ENCODE measurements at regions of chr19 and their contacts with region 1.

Region 1: DNA sequence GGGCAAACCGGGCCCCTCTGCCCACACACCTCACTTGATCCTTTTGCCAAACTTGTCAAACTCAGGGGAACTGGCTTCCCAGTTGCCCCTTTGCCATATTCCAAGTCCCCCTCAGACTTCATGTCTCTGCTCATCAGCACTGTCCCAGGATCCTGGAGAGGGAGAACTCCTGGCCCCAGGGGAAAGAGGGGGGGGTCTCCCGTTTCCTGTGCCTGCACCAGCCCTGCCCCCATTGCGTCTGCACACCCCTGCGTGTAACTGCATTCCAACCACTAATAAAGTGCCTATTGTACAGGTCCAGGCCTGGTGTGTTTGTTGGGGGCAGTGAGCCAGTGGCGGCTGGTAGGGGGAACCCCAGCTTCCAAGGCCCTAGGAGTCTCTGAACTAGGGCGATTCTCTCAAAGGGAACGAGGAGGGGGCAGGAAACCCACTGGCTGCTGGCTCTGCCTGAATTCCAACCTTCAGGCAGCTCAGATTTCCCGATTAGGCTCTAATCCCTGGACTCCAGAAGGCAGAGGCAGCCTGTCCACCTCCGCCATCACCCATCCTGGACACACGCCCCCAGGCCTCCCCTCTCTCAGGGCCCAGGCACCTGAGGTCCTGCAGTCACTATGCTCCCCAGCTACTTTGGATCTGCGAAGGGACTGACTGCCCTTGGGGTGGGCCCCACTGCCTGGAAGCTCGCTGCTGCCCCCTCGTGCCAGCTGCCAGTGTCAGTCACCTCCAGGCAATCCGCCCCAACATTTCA is 9.7 kb upstream of the ILF3 start:
- DNase-seq: peak; percentile 45
- H3K4me3 ChIP-seq: no peak overlapping the region
- H3K27ac ChIP-seq: no peak overlapping the region
- H3K27me3 ChIP-seq: no peaks in the 10 kb centered on the region
- CTCF ChIP-seq: peak; percentile 95

Region 2: GRCh38 chr19:10513221-10513620 is 131.2 kb before region 1 on chr19:
- CTCF ChIA-PET with region 1: no interaction called
- POLR2A ChIA-PET with region 1: no interaction called
- DNase-seq: no peak
- H3K4me3 ChIP-seq: no peak overlapping the region
- H3K27ac ChIP-seq: no peak overlapping the region
- H3K27me3 ChIP-seq: peaks cover 41% of the 10 kb centered on the region
- CTCF ChIP-seq: no peak

Region 3: GRCh38 chr19:10586396-10586795 is 58.0 kb before region 1 on chr19:
- CTCF ChIA-PET with region 1: interaction called, 273 read pairs
- POLR2A ChIA-PET with region 1: interaction called, 8 read pairs
- DNase-seq: no peak
- H3K4me3 ChIP-seq: no peak overlapping the region
- H3K27ac ChIP-seq: no peak overlapping the region
- H3K27me3 ChIP-seq: peaks cover 28% of the 10 kb centered on the region
- CTCF ChIP-seq: no peak

Region 4: DNA sequence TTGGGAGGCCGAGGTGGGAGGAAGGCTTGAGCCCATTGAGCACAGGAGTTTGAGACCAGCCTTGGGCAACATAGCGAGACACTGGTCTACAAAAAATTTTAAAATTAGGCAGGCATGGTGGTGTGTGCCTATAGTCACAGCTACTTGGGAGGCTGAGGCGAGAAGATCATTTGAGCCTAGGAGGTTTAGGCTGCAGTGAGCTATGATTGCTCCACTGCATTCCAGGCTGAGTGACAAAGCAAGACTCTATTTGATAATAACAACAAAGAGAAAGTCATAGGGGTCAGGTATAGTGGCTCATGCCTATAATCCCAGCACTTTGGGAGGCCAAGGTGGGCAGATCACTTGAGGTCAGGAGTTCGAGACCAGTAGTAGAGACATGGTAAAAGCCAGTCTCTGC is 23.6 kb before region 1 on chr19:
- CTCF ChIA-PET with region 1: interaction called, 28 read pairs
- POLR2A ChIA-PET with region 1: no interaction called
- DNase-seq: no peak
- H3K4me3 ChIP-seq: no peak overlapping the region
- H3K27ac ChIP-seq: no peak overlapping the region
- H3K27me3 ChIP-seq: no peaks in the 10 kb centered on the region
- CTCF ChIP-seq: no peak

Region 5: GRCh38 chr19:10662384-10663251 is 18.2 kb after region 1 on chr19:
- CTCF ChIA-PET with region 1: interaction called, 11 read pairs
- POLR2A ChIA-PET with region 1: no interaction called
- DNase-seq: no peak
- H3K4me3 ChIP-seq: no peak overlapping the region
- H3K27ac ChIP-seq: no peak overlapping the region
- H3K27me3 ChIP-seq: no peaks in the 10 kb centered on the region
- CTCF ChIP-seq: no peak